K562 (cell line): ENCODE measurements at regions of chr11 and their contacts with region 1.

Region 1: DNA sequence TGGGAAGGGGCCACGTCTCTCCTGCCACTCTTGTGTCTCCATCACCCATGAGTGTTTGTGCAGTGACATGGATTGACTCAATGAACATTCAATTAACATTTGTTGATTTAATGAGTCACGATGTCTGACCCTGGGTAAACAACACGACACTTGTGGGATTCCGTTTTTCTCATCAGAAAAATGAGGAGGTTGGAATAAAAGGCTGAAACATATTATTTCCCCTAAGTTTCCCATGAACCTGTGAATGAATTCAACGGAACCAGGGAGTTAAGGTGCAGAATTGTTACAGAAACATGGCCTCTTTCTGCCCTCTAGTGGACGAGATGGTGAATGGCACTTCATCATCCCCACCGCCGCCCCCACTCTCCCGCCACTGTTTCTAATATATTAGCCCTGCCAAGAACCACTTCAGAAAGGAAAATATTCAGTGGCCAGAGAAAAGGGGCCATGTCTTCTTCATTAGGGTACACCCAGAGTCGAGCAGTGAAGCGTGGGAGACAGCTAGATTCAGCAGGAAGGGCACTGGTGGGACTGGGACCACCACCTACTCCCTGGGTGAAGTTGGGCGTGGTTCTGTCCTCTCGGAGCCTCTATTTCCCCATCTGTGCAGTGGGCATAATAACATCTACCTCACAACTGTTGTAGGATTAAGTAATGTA is 46.3 kb upstream of the SYT13 start:
- DNase-seq: peak; percentile 47 to 77 (median 76)
- ATAC-seq: peak; percentile 86
- H3K4me3 ChIP-seq: no peak overlapping the region
- H3K27ac ChIP-seq: no peak overlapping the region
- H3K4me1 ChIP-seq: no peaks in the 10 kb centered on the region
- H3K27me3 ChIP-seq: peaks cover 0 to 4% of the 10 kb centered on the region in 2 experiments; a peak in 1 of 5 replicates
- CTCF ChIP-seq: peak in 2 of 3 experiments; percentile 59 to 68; a peak in 4 of 6 replicates
- EP300 ChIP-seq: no peak
- POLR2A ChIP-seq: no peak
- RAD21 ChIP-seq: peak; percentile 36 to 66; a peak in 3 of 4 replicates

Region 2: GRCh38 chr11:44927174-44927661 is 405.2 kb before region 1 on chr11:
- CTCF ChIA-PET with region 1: no interaction called
- POLR2A ChIA-PET with region 1: no interaction called
- in situ Hi-C with region 1: loop called (anchors 5 kb)
- intact Hi-C with region 1: no loop called
- DNase-seq: peak; percentile 70 to 82 (median 78)
- ATAC-seq: peak; percentile 94
- H3K4me3 ChIP-seq: no peak overlapping the region
- H3K27ac ChIP-seq: no peak overlapping the region
- H3K4me1 ChIP-seq: peaks cover 0 to 2% of the 10 kb centered on the region in 2 experiments; a peak in 1 of 5 replicates
- H3K27me3 ChIP-seq: peaks cover 0 to 35% of the 10 kb centered on the region in 2 experiments; a peak in 2 of 5 replicates
- CTCF ChIP-seq: peak; percentile 80 to 86 (median 82)
- EP300 ChIP-seq: no peak
- POLR2A ChIP-seq: no peak
- RAD21 ChIP-seq: peak; percentile 28 to 73; a peak in 3 of 4 replicates

Region 3: GRCh38 chr11:44936525-44936924 is 395.9 kb before region 1 on chr11:
- CTCF ChIA-PET with region 1: no interaction called
- POLR2A ChIA-PET with region 1: no interaction called
- in situ Hi-C with region 1: no loop called
- intact Hi-C with region 1: loop called (anchors 5 kb)
- DNase-seq: peak; percentile 75 to 83 (median 82)
- ATAC-seq: peak; percentile 92
- H3K4me3 ChIP-seq: no peak overlapping the region
- H3K27ac ChIP-seq: no peak overlapping the region
- H3K4me1 ChIP-seq: peaks cover 0 to 11% of the 10 kb centered on the region in 2 experiments; a peak in 1 of 5 replicates
- H3K27me3 ChIP-seq: peaks cover 0 to 23% of the 10 kb centered on the region in 2 experiments; a peak in 2 of 5 replicates
- CTCF ChIP-seq: peak; percentile 85 to 95 (median 91)
- EP300 ChIP-seq: no peak
- POLR2A ChIP-seq: no peak
- RAD21 ChIP-seq: peak; percentile 91 to 93

Region 4: DNA sequence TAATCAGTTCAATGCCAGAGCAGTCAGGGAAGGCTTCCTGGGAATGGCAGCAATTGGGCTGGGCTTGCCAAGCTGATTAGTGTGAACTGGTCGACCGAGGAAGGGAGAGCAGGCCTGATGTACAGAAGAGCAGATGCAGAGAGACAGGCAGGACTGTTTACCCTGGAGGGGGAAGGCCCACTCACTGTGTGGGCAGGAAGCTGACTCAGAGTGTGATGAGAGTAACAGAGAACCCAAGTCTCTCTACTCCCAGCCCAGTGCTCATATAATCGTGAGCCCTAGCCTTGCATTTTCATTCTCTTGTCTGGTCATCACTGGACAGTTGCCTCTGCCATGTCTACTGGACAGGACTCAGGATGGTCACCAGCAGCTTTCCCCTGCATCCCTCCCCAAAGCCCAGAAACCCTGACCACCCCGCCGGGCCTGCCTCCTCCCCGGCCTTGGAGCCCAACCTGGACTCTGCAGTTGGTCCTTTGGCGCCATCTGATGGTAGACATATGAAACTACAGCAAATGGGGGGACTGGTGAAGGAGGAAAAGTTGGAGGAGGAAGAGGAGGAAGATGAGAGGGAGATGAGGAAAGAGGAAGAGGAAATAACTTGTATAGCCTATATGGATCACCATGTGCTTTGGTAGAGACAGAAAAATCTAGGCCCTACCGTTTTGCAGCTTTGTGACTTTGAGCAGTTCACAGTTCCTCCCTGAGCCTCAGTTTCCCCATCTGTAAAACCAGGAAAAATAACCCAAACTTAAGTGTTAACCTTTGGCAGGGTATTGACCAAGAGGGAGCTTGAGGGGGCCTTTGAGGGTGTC is 229.4 kb before region 1 on chr11:
- CTCF ChIA-PET with region 1: no interaction called
- POLR2A ChIA-PET with region 1: no interaction called
- in situ Hi-C with region 1: loop called (anchors 5 kb)
- intact Hi-C with region 1: no loop called
- DNase-seq: peak; percentile 70 to 85 (median 80)
- ATAC-seq: peak; percentile 80
- H3K4me3 ChIP-seq: no peak overlapping the region
- H3K27ac ChIP-seq: no peak overlapping the region
- H3K4me1 ChIP-seq: no peaks in the 10 kb centered on the region; a peak in 1 of 5 replicates
- H3K27me3 ChIP-seq: peaks cover 0 to 12% of the 10 kb centered on the region in 2 experiments; a peak in 2 of 5 replicates
- CTCF ChIP-seq: peak; percentile 88 to 90 (median 88)
- EP300 ChIP-seq: no peak
- POLR2A ChIP-seq: no peak
- RAD21 ChIP-seq: peak; percentile 91 to 94

Region 5: DNA sequence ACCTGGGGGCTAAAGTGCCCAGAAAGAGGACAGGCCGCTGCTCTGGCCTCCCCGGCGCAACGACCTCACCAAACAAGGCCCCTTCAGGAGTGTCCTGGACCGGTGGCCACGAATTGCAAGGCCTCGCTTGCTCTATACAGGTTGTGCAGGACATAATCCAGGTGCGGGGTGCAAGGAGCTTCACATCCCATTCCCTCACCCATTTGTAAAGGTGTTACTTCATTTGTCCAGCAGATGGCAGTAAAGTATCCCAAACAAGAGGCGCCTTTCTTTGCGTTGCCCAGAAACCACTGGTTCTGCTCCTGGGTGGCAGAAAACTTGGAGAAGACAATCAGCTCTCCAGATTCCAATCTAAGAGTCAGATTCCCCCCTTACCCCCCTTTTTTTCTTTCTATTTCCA is 221.8 kb before region 1 on chr11:
- CTCF ChIA-PET with region 1: interaction called, 20 read pairs
- POLR2A ChIA-PET with region 1: no interaction called
- in situ Hi-C with region 1: loop called (anchors 5 kb)
- intact Hi-C with region 1: loop called (anchors 1 kb)
- DNase-seq: peak; percentile 67 to 74 (median 71)
- ATAC-seq: peak; percentile 86
- H3K4me3 ChIP-seq: no peak overlapping the region
- H3K27ac ChIP-seq: no peak overlapping the region
- H3K4me1 ChIP-seq: no peaks in the 10 kb centered on the region; a peak in 1 of 5 replicates
- H3K27me3 ChIP-seq: peaks cover 0 to 6% of the 10 kb centered on the region in 2 experiments; a peak in 1 of 5 replicates
- CTCF ChIP-seq: peak; percentile 58 to 87 (median 69)
- EP300 ChIP-seq: no peak
- POLR2A ChIP-seq: no peak
- RAD21 ChIP-seq: peak; percentile 88 to 89

Region 6: GRCh38 chr11:45252134-45252855 is 80.1 kb before region 1 on chr11:
- CTCF ChIA-PET with region 1: no interaction called
- POLR2A ChIA-PET with region 1: no interaction called
- in situ Hi-C with region 1: no loop called
- intact Hi-C with region 1: loop called (anchors 2 kb)
- DNase-seq: peak; percentile 70 to 83 (median 78)
- ATAC-seq: peak; percentile 100
- H3K4me3 ChIP-seq: no peak overlapping the region
- H3K27ac ChIP-seq: no peak overlapping the region
- H3K4me1 ChIP-seq: peaks cover 0 to 5% of the 10 kb centered on the region in 2 experiments; a peak in 3 of 5 replicates
- H3K27me3 ChIP-seq: peaks cover 0 to 3% of the 10 kb centered on the region in 2 experiments; a peak in 1 of 5 replicates
- CTCF ChIP-seq: peak; percentile 69 to 83 (median 77)
- EP300 ChIP-seq: no peak
- POLR2A ChIP-seq: no peak
- RAD21 ChIP-seq: peak; percentile 20 to 57; a peak in 2 of 4 replicates